Calu3 (cell line): ENCODE measurements at regions of chr9 and their contacts with region 1.

Region 1: GRCh38 chr9:2919347-2919746 is 75.5 kb upstream of the PUM3 start:
- DNase-seq: no peak
- H3K4me3 Mint-ChIP-seq: no peak overlapping the region
- H3K27ac Mint-ChIP-seq: no peak overlapping the region
- H3K4me1 Mint-ChIP-seq: no peaks in the 10 kb centered on the region
- H3K27me3 Mint-ChIP-seq: peaks cover under 1% of the 10 kb centered on the region
- CTCF ChIP-seq: no peak

Region 2: GRCh38 chr9:2461892-2462291 is 457.5 kb before region 1 on chr9:
- CTCF ChIA-PET with region 1: no interaction called
- intact Hi-C with region 1: no loop called
- DNase-seq: no peak
- H3K4me3 Mint-ChIP-seq: no peak overlapping the region
- H3K27ac Mint-ChIP-seq: no peak overlapping the region
- H3K4me1 Mint-ChIP-seq: peaks cover 22% of the 10 kb centered on the region
- H3K27me3 Mint-ChIP-seq: no peaks in the 10 kb centered on the region
- CTCF ChIP-seq: no peak

Region 3: GRCh38 chr9:2666569-2666968 is 252.8 kb before region 1 on chr9:
- CTCF ChIA-PET with region 1: no interaction called
- intact Hi-C with region 1: no loop called
- DNase-seq: no peak
- H3K4me3 Mint-ChIP-seq: no peak overlapping the region
- H3K27ac Mint-ChIP-seq: no peak overlapping the region
- H3K4me1 Mint-ChIP-seq: no peaks in the 10 kb centered on the region
- H3K27me3 Mint-ChIP-seq: no peaks in the 10 kb centered on the region
- CTCF ChIP-seq: no peak

Region 4: DNA sequence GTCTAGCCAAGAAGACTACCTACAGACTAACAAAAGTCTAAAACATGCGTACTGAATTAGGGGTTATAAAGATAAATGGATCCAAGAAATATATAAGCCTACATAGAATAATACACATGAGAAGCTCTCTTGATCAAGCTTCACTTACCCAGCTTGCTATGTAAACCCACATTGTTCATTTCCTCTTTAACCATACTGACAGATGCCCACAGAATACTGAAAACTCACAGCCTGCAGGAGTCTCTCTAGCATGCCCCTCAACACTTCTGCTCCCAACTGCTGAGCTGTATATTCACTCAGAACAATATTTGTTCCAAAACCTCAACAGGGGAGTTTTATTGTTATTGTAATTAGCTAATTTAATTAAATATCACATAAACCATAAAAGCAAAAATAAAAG is 554.1 kb after region 1 on chr9:
- CTCF ChIA-PET with region 1: interaction called, 12 read pairs
- intact Hi-C with region 1: no loop called
- DNase-seq: no peak
- H3K4me3 Mint-ChIP-seq: no peak overlapping the region
- H3K27ac Mint-ChIP-seq: no peak overlapping the region
- H3K4me1 Mint-ChIP-seq: peaks cover 34% of the 10 kb centered on the region
- H3K27me3 Mint-ChIP-seq: no peaks in the 10 kb centered on the region
- CTCF ChIP-seq: no peak